Activated T-helper 1 cell treated with anti-CD3 and anti-CD28 coated beads, Interleukin-12 subunit alpha, Interleukin-12 subunit beta, Interleukin-2, Interleukin-4 antibody, amounts not matched to agents 30 ng/mL and 10 ng/mL and 1 ng/mL, durations not matched to agents 14 hours and 24 hours and 36 hours (primary cell): ENCODE measurements at regions of chr1 and their contacts with region 1.

Region 1: GRCh38 chr1:28886731-28887418 is 27.5 kb upstream of the EPB41 start:
- DNase-seq: peak; percentile 91
- H3K4me3 Mint-ChIP-seq: peak overlapping the region; percentile 88
- H3K27ac Mint-ChIP-seq: peak overlapping the region; percentile 93
- H3K4me1 Mint-ChIP-seq: peaks cover 56% of the 10 kb centered on the region
- H3K27me3 Mint-ChIP-seq: no peaks in the 10 kb centered on the region

Region 2: DNA sequence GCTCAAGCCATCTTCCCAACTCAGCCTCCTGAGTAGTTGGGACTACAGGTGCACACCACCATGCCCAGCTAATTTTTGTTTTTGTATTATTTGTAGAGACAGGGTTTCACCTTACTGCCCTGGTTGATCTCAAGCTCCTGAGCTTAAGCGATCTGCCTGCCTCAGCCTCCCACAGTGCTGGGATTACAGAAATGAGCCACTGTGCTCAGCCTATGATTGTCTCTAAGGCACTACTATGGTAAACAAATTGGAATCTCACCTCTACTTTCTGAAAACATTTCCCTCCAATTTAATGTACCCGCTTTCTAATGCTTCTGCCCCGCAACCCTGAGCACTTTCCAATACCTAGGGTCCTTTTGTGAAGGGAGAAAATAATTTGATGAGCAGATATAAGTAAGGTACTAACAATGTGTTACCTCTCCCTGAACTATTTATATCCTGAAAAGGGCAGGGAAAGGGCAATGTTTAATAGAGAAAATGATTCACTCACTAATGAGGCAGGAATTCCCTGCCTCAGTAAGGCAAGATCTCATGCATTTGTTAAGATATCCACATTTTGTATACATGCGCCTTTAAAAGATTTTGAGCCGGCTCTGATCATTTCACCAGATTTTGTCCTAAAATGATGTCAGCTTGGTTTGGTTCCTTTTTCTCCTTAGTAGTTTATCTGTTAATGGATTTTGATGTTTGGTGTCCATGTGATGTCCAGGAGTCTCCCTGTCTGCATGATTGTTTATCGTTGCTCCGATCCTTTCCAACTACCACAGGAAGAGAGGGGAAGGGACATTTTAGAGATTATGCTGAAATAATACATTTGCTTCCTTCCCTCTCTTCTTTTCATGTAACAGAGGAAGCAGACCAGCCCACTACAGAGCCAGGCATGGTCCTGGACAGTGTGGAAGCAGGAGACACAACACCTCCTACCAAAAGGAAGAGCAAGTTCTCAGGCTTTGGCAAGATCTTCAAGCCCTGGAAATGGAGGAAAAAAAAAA is 428.3 kb before region 1 on chr1:
- intact Hi-C with region 1: no loop called
- DNase-seq: no peak
- H3K4me3 Mint-ChIP-seq: no peak overlapping the region
- H3K27ac Mint-ChIP-seq: no peak overlapping the region
- H3K4me1 Mint-ChIP-seq: peaks cover 20% of the 10 kb centered on the region
- H3K27me3 Mint-ChIP-seq: no peaks in the 10 kb centered on the region

Region 3: GRCh38 chr1:28736450-28737306 is 150.2 kb before region 1 on chr1 and contains the start of gene YTHDF2:
- intact Hi-C with region 1: loop called (anchors 2 kb)
- DNase-seq: peak; percentile 96
- H3K4me3 Mint-ChIP-seq: peak within 1 kb of the TSS; percentile 96
- H3K27ac Mint-ChIP-seq: peak within 1 kb of the TSS; percentile 93
- H3K4me1 Mint-ChIP-seq: peaks cover 27% of the 10 kb centered on the region
- H3K27me3 Mint-ChIP-seq: no peaks in the 10 kb centered on the region
- total RNA-seq, gene YTHDF2: 91.7 and 94.9 TPM in 2 replicates

Region 4: DNA sequence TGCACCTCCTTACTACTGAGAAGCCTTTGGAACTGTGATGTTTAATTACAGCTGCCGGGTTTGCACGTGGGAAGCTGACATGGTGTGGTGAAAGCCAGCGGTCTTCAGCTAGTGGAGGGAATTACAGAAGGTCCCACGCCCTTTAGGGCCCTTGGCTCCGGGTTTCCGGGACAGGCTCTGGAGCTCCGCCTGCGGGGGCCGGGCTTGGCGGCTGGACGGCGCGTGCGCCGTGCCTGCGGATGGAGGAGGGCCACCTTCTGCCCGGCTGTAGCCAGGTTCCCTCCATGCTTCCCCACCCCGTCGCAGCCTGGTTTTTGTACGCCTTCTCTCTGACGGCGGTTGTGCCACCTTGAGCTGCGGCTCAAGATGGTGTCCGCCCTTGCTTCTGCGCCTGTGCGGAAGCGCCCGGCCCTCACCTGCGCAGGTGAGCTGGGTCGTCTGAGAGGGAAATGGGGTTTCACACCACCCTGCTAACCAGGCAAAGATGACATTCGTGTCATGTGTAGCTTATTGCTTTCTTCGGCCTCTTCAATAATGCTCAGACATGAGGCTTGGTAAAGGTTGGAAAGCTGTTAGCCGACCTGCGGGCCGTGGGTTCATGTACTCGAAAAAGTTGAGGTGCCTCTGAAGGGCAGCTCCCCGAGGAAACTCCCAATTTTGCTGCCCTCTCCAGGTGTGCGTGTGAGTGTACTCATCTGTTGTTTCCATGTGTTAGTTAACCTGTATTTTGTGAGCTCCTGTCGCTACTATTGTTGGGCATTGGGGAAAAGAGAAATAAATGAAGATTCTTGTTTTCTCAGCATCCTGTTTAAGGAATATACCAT is 111.5 kb before region 1 on chr1:
- intact Hi-C with region 1: no loop called
- DNase-seq: peak; percentile 61
- H3K4me3 Mint-ChIP-seq: peak overlapping the region; percentile 49
- H3K27ac Mint-ChIP-seq: no peak overlapping the region
- H3K4me1 Mint-ChIP-seq: peaks cover 9% of the 10 kb centered on the region
- H3K27me3 Mint-ChIP-seq: peaks cover 2% of the 10 kb centered on the region

Region 5: GRCh38 chr1:28865997-28866650 is 20.8 kb before region 1 on chr1:
- intact Hi-C with region 1: no loop called
- DNase-seq: no peak
- H3K4me3 Mint-ChIP-seq: no peak overlapping the region
- H3K27ac Mint-ChIP-seq: no peak overlapping the region
- H3K4me1 Mint-ChIP-seq: no peaks in the 10 kb centered on the region
- H3K27me3 Mint-ChIP-seq: peaks cover 7% of the 10 kb centered on the region

Region 6: DNA sequence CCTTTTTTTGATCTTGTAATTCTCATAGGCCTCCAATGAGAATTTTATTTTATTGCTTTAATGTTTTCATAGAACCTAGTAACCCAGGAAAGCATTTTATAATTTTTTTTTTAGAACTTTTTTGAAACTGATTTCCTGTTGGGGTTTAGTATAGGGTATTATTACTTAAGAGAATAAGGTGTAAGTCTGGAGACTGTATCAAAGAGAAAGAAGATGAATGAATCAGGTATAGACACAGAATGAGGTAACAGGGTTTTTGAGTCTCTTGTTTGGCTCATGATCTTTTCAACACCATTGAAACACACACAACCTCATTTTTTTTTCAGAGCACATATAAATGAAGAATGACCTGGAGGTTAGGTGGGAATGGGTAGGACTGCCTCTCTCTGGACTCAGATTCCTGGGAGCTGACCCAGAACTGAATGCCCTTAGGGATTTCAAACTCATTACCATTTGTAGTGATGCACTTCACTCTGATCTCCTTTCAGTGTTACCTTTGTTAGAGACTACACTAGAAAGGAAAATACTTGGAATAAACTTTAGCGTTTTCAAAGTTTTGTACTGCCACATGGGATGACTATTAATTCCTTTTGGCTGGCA is 78.5 kb after region 1 on chr1:
- intact Hi-C with region 1: loop called (anchors 1 kb)
- DNase-seq: no peak
- H3K4me3 Mint-ChIP-seq: no peak overlapping the region
- H3K27ac Mint-ChIP-seq: no peak overlapping the region
- H3K4me1 Mint-ChIP-seq: peaks cover 25% of the 10 kb centered on the region
- H3K27me3 Mint-ChIP-seq: no peaks in the 10 kb centered on the region

Region 7: DNA sequence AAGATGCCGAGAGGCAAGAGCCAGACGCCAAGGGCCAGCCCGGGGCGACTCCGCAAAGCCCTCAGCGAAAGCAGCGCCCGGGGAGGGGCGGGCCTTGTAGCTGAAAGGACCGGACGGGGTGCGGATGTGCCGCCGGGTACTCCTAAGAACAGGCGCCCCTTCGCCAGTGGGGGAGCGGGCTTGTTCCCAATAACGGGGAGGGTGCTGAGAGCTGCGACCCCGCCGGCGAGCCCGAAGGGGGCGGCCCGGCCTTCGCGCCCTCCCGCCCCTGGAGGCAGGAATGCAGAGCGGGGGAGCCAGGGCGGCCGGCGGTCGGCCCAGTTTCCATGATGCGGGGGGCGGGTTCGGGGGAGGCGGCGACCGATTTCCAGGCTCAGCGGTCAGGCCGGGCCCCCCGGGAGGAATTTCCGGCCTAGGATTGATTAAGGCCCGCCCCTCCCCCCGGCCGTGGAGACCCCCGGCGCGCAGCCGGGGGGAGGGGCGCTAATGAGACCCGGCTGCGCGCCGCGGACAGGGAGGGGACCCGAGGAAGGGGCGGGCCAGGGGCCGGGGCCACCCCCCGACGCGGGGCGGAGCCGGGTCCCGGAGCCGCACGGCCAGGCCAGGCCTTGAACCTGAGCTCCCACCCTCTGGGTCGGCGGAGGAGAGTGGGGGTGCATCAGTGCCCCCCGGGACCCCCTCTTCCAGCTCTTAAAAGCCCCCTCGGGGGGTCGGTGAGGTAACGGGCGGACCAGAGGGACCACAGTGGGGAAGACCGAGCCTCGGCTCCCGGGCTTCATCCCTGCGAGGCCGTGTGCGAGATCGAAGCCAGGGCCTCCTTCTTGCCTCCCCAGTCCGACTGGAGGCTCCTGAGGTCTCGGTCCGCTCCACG is 237.7 kb after region 1 on chr1:
- intact Hi-C with region 1: loop called (anchors 1 kb)
- DNase-seq: peak; percentile 46
- H3K4me3 Mint-ChIP-seq: peak overlapping the region; percentile 82
- H3K27ac Mint-ChIP-seq: peak overlapping the region; percentile 23
- H3K4me1 Mint-ChIP-seq: no peaks in the 10 kb centered on the region
- H3K27me3 Mint-ChIP-seq: peaks cover 29% of the 10 kb centered on the region

Region 8: DNA sequence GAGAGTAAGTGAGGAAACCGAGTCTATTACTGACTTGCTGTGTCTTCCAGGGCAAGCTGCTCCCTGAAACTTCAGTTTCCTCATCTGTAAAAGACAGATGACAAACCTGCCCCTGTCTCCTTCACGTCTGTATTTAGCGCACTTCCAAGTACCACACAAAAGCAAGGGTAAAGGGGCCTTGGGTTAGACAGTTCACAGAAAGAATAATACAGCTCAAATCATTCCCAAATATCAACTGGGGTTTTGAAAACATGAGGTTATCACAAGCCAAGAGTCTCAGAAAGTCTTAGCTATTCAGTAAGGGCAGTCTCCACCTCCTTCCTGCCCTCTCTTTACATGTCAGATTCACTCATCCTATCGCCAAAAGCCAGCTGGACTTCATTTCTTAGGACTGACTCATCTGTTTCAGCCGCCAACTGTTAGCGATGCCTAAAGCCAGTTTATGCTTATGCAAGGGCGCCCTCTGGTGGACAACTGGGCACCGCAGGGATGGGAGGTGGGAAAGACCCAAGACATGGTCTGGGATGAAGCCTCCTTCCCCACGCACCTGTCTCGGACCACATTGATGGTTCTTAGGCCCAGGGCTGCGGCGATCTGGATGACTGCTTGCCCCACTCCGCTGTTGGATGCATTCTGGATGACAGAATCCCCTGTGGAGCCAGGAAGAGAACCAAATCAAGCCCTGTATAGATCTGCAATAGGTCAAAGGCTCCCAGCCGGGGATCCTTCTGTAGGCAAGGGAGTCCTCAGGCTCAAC is 315.9 kb after region 1 on chr1:
- intact Hi-C with region 1: loop called (anchors 1 kb)
- DNase-seq: peak; percentile 78
- H3K4me3 Mint-ChIP-seq: no peak overlapping the region
- H3K27ac Mint-ChIP-seq: no peak overlapping the region
- H3K4me1 Mint-ChIP-seq: peaks cover 11% of the 10 kb centered on the region
- H3K27me3 Mint-ChIP-seq: no peaks in the 10 kb centered on the region